AG04449 (cell line): ENCODE measurements at regions of chr12 and their contacts with region 1.

Region 1: GRCh38 chr12:49945394-49946080 is 5.0 kb upstream of the AQP2 start:
- DNase-seq: peak; percentile 12
- H3K4me3 ChIP-seq: peak overlapping the region; percentile 28
- CTCF ChIP-seq: peak; percentile 96

Region 2: GRCh38 chr12:49789992-49790391 is 155.5 kb before region 1 on chr12:
- CTCF ChIA-PET with region 1: no interaction called
- POLR2A ChIA-PET with region 1: no interaction called
- DNase-seq: no peak
- H3K4me3 ChIP-seq: no peak overlapping the region
- CTCF ChIP-seq: no peak

Region 3: GRCh38 chr12:49930515-49931288 is 14.8 kb before region 1 on chr12:
- CTCF ChIA-PET with region 1: interaction called, 173 read pairs
- POLR2A ChIA-PET with region 1: no interaction called
- DNase-seq: no peak
- H3K4me3 ChIP-seq: no peak overlapping the region
- CTCF ChIP-seq: no peak

Region 4: DNA sequence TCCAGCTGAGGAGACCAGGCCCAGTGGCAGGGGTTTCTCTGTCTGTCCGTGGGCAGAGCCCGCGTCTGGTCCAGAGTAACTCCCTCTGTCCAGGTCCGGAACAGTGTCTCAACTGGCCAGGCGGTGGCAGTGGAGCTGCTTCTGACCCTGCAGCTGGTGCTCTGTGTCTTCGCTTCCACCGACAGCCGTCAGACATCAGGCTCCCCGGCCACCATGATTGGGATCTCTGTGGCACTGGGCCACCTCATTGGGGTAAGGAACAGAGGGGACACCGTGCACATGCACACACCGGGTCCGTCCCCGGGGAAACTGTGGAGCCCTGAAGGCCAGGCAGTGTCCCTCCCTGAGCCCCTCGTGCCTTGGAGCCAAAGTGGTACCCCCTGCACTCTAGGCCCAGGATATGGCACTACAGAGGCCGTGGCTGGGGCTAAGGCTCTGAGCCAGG is 28.7 kb after region 1 on chr12:
- CTCF ChIA-PET with region 1: interaction called, 95 read pairs
- POLR2A ChIA-PET with region 1: no interaction called
- DNase-seq: no peak
- H3K4me3 ChIP-seq: no peak overlapping the region
- CTCF ChIP-seq: peak; percentile 80

Region 5: GRCh38 chr12:49983892-49984291 is 38.4 kb after region 1 on chr12:
- CTCF ChIA-PET with region 1: interaction called, 14 read pairs
- POLR2A ChIA-PET with region 1: no interaction called
- DNase-seq: peak; percentile 45
- H3K4me3 ChIP-seq: no peak overlapping the region; the same call in 1 of the 2 replicates
- CTCF ChIP-seq: no peak

Region 6: DNA sequence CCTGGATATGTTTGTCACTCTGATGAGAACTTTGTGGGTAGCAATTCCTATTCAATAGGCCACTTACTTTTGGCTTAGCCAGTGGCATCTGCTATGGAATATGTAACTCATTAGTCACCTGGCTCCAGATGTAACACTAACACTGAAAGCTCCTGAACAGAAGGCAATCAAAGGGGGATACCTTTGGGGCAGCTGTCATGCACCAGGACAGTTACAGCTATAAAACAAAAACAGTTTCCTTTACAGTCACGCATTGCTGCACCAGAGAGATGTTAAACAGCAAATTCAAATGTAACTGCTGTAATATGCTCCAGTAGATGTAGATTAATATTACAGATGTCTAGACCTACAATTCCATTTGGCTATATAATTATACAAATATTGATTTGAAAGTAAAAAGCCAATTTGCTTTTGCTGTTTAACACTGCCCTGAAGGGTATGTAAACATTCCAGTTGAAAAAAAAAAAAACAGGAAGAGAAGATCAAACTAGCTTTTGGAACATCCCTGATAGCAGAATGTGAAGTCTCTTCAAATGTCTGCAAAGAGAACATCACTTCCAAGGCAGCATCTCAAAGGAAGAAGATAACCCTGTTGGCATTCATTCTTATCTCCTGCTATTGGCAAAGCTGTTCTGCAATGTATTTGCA is 61.4 kb after region 1 on chr12:
- CTCF ChIA-PET with region 1: interaction called, 14 read pairs
- POLR2A ChIA-PET with region 1: no interaction called
- DNase-seq: no peak
- H3K4me3 ChIP-seq: no peak overlapping the region
- CTCF ChIP-seq: no peak

Region 7: DNA sequence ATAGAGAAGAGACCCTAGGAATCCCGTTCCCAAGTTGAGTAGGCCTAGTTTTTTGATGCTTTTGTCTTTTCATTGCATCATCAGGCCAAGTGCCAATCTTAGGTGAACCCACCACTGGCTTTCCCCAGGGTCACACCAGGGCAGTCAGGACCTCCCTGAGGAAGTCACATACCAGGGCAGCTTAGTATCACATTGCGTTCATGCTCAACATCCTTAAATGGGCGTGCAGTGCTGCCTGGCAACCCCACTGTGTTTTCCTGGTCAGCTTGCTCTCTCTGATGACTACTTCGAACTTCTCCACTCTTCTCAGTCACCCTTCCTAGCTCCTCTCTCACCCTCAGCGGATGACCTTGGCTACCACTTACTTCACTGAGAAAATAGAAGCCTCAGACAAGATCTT is 120.9 kb after region 1 on chr12:
- CTCF ChIA-PET with region 1: interaction called, 27 read pairs
- POLR2A ChIA-PET with region 1: no interaction called
- DNase-seq: peak; percentile 84
- H3K4me3 ChIP-seq: no peak overlapping the region
- CTCF ChIP-seq: no peak